ENCODE measurements at regions of chr1 and their contacts with region 1.

Region 1: GRCh38 chr1:6545276-6546112 is 8.8 kb downstream of the NOL9 start:
- DNase-seq: no peak
- H3K27ac ChIP-seq: peak overlapping the region; percentile 65
- CTCF ChIP-seq: no peak

Region 2: GRCh38 chr1:6300342-6301048 is 245.0 kb before region 1 on chr1:
- CTCF ChIA-PET with region 1: no interaction called
- POLR2A ChIA-PET with region 1: no interaction called
- DNase-seq: peak; percentile 59
- H3K27ac ChIP-seq: peak overlapping the region; percentile 84
- CTCF ChIP-seq: no peak

Region 3: GRCh38 chr1:6579374-6580118 is 34.1 kb after region 1 on chr1 and contains the start of gene ZBTB48:
- CTCF ChIA-PET with region 1: no interaction called
- POLR2A ChIA-PET with region 1: no interaction called
- DNase-seq: peak; percentile 99
- H3K27ac ChIP-seq: peak within 1 kb of the TSS; percentile 92
- CTCF ChIP-seq: no peak

Region 4: DNA sequence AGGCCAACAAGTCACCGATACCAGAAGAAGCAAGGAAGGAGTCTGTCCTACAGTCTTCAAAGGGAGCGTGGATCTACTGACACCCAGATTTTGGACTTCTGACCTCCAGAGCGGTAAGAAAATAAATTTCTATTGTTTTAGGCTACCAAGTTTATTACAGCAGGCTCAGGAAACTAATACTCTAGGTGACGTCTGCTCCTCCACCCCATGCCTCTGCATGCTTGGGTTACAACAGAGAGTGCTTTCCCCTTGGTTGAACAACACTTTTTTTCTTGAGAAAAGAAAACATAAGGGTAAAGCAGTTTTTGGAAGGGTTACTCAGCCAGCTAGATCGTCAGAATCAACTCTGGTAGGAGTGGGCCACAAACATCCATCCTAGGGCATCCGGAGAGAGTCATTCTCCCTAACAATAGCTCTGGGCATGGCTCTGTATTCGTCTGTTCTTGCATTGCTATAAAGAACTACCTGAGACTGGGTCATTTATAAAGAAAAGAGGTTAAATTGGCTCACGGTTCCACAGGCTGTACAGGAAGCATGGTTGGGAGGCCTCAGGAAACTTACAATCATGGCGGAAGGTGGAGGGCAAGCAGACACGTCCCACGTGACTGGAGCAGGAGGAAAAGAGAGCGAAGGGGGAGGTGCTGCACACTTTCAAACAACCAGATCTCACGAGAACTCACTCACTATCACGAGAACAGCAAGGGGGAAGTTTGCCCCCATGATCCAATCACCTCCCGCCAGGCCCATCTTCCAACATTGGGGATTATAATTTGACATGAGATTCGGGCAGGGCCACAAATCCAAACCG is 178.3 kb after region 1 on chr1:
- CTCF ChIA-PET with region 1: interaction called, 12 read pairs
- POLR2A ChIA-PET with region 1: no interaction called
- DNase-seq: no peak
- H3K27ac ChIP-seq: peak overlapping the region; percentile 60; the same call in 1 of the 2 replicates
- CTCF ChIP-seq: no peak

Region 5: DNA sequence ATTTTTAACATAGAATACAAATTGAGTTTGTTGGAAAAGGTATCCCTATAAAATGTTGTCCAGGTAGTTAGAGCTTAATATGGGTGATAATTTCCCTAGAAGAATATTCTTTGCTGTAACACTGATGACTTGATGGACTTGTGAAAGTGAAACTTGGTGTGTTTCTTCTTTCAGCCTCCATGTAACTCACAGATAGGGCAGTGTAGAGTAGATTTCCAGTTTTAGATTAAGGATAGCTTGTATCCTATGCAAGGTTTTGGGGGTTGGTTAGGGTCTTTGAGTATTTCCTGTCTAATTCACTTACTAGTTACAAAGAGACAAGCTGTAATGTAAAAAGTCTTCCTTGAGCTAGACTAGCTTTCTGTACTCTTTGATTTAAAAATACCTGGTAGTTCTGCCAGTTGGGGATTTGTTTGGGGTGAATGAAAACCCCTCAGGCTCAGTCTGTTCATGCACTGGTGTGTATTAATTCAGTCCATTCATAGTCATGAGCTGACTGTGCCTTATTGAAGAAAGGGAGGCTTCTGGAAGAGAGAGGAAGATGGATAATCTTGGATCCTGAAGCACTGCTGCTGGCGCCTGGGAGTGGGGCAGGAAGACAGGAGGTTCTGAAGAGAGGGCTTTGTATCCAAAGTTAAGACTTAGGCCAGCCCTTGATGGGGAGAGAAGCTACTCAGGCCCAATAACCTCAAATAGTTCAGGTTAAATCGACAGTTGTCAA is 323.3 kb after region 1 on chr1:
- CTCF ChIA-PET with region 1: no interaction called
- POLR2A ChIA-PET with region 1: no interaction called
- DNase-seq: no peak
- H3K27ac ChIP-seq: no peak overlapping the region
- CTCF ChIP-seq: no peak

Measured in RWPE1 (cell line).